KBM-7 (cell line): ENCODE measurements at regions of chr12 and their contacts with region 1.

Region 1: DNA sequence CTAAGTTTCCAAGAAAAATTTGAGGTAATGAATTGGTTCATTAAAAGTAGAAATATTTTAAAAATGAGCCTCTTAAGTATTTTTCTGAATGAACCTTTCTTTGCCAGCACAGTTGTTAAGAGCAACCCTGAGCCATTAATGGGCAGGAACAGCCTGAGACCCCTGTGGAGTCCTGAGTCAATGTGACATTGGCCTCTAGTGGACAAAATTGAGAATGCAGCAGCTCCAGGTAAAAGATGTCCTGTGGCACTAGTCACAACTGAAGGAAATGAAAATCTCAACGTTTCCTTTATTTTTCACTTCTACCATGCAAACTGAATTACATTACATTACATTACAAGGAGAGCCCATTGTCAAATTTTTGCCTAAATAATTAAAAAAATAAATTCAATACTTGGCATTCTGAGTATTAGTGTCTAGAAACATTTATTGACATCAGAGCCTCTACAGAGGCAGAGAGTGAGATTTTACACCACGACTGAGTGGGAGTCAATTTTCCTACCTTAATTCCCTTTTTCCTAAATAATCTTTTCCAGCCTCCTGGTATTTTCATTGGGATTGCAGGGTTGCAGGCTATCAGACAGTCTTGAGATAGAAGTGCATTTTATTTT is 135.7 kb downstream of the PPM1H start:
- DNase-seq: peak; percentile 78

Region 2: GRCh38 chr12:62435303-62436163 is 363.7 kb before region 1 on chr12:
- in situ Hi-C with region 1: loop called (anchors 25 kb)
- DNase-seq: peak; percentile 87

Region 3: GRCh38 chr12:62581288-62582064 is 217.8 kb before region 1 on chr12:
- in situ Hi-C with region 1: loop called (anchors 25 kb)
- DNase-seq: peak; percentile 74

Region 4: DNA sequence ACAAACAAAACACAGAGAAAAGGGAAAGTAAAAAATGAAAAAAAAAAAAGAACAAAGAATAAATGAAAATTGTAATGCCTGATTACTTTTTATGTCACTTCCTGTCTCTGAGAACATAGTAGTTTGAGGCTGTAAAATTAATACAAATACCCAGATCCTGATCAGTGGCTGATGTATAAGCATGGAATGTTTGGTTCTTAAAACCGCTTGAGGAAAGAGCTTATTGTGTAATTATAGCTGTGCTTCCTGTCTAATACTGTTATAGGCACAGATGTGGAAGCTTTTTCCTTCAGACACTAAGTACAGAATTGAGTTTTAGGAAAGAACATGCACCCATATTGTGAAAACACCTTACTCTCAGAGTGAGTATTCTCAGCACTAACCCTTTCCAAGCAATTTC is 264.8 kb after region 1 on chr12:
- in situ Hi-C with region 1: no loop called
- DNase-seq: no peak

Region 5: GRCh38 chr12:63420206-63420644 is 621.0 kb after region 1 on chr12:
- in situ Hi-C with region 1: no loop called
- DNase-seq: peak; percentile 97